CD4-positive, alpha-beta T cell (primary cell): ENCODE measurements at regions of chr6 and their contacts with region 1.

Region 1: DNA sequence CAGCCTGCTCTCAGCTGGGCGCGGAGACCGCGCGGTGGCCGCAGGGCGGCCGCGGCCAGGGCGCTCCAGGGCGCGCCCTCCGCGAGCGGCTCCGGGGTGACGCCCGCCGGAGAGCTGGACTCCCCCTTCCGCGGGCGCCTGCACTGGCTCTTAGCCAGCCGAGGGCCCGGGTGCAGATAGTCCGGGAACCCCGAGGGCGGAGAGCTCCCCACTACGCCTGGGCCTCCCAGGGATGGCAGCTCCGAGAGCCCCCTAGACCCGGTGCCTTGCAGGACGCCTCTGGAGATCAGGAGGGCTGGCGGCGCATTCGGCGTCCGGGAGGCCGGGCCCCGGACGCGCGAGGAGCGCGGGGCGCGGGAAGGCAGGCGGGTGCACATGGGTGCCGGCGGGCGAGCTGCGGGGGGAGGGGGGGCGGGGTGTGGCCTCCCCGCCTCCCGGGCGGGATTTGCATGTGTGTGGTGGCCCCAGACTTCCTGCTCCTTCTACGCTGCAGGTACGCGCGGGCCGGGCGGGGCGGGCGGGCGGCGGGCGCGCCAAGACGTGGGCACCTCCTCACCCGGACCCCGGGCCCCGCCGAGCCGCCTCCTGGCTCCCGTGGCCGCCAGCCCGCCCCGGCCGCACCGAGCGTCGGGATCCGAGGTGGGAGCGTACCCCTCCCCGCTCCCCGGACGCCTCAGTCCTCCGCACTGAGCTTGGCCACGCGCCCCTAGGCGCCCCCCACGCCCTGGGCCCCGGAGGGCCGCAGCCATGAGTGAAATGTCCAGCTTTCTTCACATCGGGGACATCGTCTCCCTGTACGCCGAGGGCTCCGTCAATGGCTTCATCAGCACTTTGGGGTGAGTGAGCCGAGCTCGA is at the start of gene ITPR3:
- DNase-seq: peak; percentile 61 to 93 (median 74)
- ATAC-seq: peak; percentile 88
- H3K4me3 ChIP-seq: peak within 1 kb of the TSS; percentile 99
- H3K4me3 Mint-ChIP-seq: peak within 1 kb of the TSS; percentile 95
- H3K27ac ChIP-seq: peak within 1 kb of the TSS; percentile 76 to 82
- H3K27ac Mint-ChIP-seq: peak within 1 kb of the TSS; percentile 93
- H3K4me1 ChIP-seq: peaks cover 60% of the 10 kb centered on the region
- H3K4me1 Mint-ChIP-seq: peaks cover 42% of the 10 kb centered on the region
- H3K27me3 ChIP-seq: no peaks in the 10 kb centered on the region
- H3K27me3 Mint-ChIP-seq: no peaks in the 10 kb centered on the region
- CTCF ChIP-seq: no peak
- total RNA-seq, gene ITPR3: 44.5 to 45.5 TPM

Region 2: GRCh38 chr6:32387589-32388340 is 1233.3 kb before region 1 on chr6:
- CTCF ChIA-PET with region 1: no interaction called
- POLR2A ChIA-PET with region 1: no interaction called
- intact Hi-C with region 1: no loop called
- DNase-seq: no peak
- ATAC-seq: no peak
- H3K4me3 ChIP-seq: no peak overlapping the region
- H3K4me3 Mint-ChIP-seq: no peak overlapping the region
- H3K27ac ChIP-seq: no peak overlapping the region
- H3K27ac Mint-ChIP-seq: no peak overlapping the region
- H3K4me1 ChIP-seq: no peaks in the 10 kb centered on the region
- H3K4me1 Mint-ChIP-seq: no peaks in the 10 kb centered on the region
- H3K27me3 ChIP-seq: no peaks in the 10 kb centered on the region
- H3K27me3 Mint-ChIP-seq: peaks cover 34% of the 10 kb centered on the region
- CTCF ChIP-seq: no peak

Region 3: DNA sequence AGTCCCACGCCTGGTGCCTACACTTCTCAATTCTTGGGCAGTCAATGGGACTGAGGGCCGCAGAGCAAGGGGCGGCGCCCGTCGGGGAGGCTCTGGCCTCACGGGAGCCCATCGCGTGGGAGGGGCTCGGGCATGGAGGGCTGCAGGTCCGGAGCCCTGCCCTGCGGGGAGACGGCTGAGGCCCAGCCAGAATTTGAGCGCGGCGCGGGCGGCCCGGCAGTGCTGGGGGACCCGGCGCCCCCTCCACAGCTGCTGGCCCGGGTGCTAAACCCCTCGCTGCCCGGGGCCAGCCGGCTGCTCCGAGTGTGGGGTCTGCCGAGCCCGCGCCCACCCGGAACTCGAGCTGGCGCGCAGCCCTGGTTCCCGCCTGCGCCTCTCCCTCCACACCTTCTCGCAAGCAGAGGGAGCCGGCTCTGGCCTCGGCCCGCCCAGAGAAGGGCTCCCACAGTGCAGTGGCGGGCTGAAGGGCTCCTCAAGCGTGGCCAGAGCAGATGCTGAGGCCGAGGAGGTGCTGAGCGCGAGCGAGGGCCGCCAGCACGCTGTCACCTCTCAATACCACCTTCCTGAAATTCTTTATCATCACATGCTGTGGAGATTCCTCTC is 99.5 kb before region 1 on chr6:
- CTCF ChIA-PET with region 1: no interaction called
- POLR2A ChIA-PET with region 1: no interaction called
- intact Hi-C with region 1: no loop called
- DNase-seq: no peak
- ATAC-seq: no peak
- H3K4me3 ChIP-seq: no peak overlapping the region
- H3K4me3 Mint-ChIP-seq: no peak overlapping the region
- H3K27ac ChIP-seq: no peak overlapping the region
- H3K27ac Mint-ChIP-seq: no peak overlapping the region
- H3K4me1 ChIP-seq: no peaks in the 10 kb centered on the region
- H3K4me1 Mint-ChIP-seq: no peaks in the 10 kb centered on the region
- H3K27me3 ChIP-seq: no peaks in the 10 kb centered on the region
- H3K27me3 Mint-ChIP-seq: no peaks in the 10 kb centered on the region
- CTCF ChIP-seq: no peak

Region 4: DNA sequence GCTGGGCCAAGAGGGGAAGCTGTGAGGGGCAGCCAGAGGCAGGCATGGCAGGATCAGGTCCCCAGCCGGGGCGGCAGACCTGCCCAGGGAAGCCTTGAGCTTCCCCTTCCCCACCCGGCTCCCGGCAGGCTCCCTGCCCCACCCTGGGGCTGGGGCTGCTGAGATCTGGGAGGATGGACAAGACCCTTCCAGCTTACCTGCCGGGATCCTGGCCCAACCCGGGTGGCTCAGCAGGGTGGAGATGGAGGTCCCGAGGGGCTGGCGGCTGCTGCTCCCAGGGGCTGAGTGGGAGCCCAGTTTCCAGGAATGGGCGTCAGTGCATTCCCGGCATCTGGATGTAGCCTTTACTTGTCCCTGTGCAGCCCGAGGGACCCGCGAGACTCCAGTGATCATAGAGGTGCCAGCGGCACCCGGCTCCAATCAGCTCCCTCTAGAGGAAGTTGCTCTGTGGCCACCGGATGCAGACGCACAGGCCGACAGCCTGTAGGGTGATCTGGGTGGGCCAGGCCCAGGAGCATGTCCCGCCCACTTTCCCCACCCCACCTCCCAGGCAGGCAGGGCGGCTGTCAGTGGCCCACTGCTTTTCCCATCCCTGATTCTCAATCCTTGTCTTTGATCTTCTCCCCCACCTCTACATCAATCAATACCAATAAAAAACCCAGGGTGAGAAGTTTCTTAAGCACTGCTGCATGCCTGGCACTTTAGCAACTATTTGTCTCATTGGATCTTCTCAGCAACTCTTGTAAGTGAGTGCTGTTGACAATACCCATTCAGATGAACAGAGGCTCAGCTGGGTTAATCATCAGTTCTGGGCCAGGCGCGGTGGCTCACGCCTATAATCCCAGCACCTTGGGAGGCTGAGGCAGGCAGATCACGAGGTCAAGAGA is 41.0 kb before region 1 on chr6 and contains the start of gene BAK1:
- CTCF ChIA-PET with region 1: interaction called, 4 read pairs
- POLR2A ChIA-PET with region 1: interaction called, 11 read pairs
- intact Hi-C with region 1: no loop called
- DNase-seq: peak; percentile 64 to 92 (median 78)
- ATAC-seq: peak; percentile 93
- H3K4me3 ChIP-seq: peak within 1 kb of the TSS; percentile 99
- H3K4me3 Mint-ChIP-seq: peak within 1 kb of the TSS; percentile 96
- H3K27ac ChIP-seq: peak within 1 kb of the TSS; percentile 82 to 88
- H3K27ac Mint-ChIP-seq: peak within 1 kb of the TSS; percentile 97
- H3K4me1 ChIP-seq: peaks cover 51% of the 10 kb centered on the region
- H3K4me1 Mint-ChIP-seq: peaks cover 44% of the 10 kb centered on the region
- H3K27me3 ChIP-seq: no peaks in the 10 kb centered on the region
- H3K27me3 Mint-ChIP-seq: no peaks in the 10 kb centered on the region
- CTCF ChIP-seq: peak; percentile 63
- total RNA-seq, gene BAK1: 38.3 to 40.8 TPM

Region 5: GRCh38 chr6:33607784-33608161 is 13.3 kb before region 1 on chr6:
- CTCF ChIA-PET with region 1: no interaction called
- POLR2A ChIA-PET with region 1: interaction called, 10 read pairs
- intact Hi-C with region 1: no loop called
- DNase-seq: peak in 6 of 14 experiments; percentile 22 to 62 (median 53)
- ATAC-seq: peak; percentile 55
- H3K4me3 ChIP-seq: no peak overlapping the region
- H3K4me3 Mint-ChIP-seq: no peak overlapping the region
- H3K27ac ChIP-seq: no peak overlapping the region
- H3K27ac Mint-ChIP-seq: no peak overlapping the region
- H3K4me1 ChIP-seq: peaks cover 4% of the 10 kb centered on the region
- H3K4me1 Mint-ChIP-seq: no peaks in the 10 kb centered on the region
- H3K27me3 ChIP-seq: no peaks in the 10 kb centered on the region
- H3K27me3 Mint-ChIP-seq: no peaks in the 10 kb centered on the region
- CTCF ChIP-seq: no peak

Region 6: GRCh38 chr6:33668927-33669326 is 47.8 kb after region 1 on chr6:
- CTCF ChIA-PET with region 1: interaction called, 3 read pairs
- POLR2A ChIA-PET with region 1: interaction called, 12 read pairs
- intact Hi-C with region 1: no loop called
- DNase-seq: peak; percentile 54 to 88 (median 74)
- ATAC-seq: peak; percentile 99
- H3K4me3 ChIP-seq: no peak overlapping the region
- H3K4me3 Mint-ChIP-seq: no peak overlapping the region
- H3K27ac ChIP-seq: peak overlapping the region in 1 of 2 donors; percentile 40
- H3K27ac Mint-ChIP-seq: peak overlapping the region; percentile 81
- H3K4me1 ChIP-seq: peaks cover 19% of the 10 kb centered on the region
- H3K4me1 Mint-ChIP-seq: peaks cover 14% of the 10 kb centered on the region
- H3K27me3 ChIP-seq: no peaks in the 10 kb centered on the region
- H3K27me3 Mint-ChIP-seq: no peaks in the 10 kb centered on the region
- CTCF ChIP-seq: no peak

Region 7: GRCh38 chr6:33711140-33712129 is 90.4 kb after region 1 on chr6 and contains the start of gene UQCC2:
- CTCF ChIA-PET with region 1: interaction called, 3 read pairs
- POLR2A ChIA-PET with region 1: interaction called, 22 read pairs
- intact Hi-C with region 1: no loop called
- DNase-seq: peak; percentile 93 to 99 (median 97)
- ATAC-seq: peak; percentile 97
- H3K4me3 ChIP-seq: peak within 1 kb of the TSS; percentile 72
- H3K4me3 Mint-ChIP-seq: peak within 1 kb of the TSS; percentile 100
- H3K27ac ChIP-seq: peak within 1 kb of the TSS; percentile 84 to 90
- H3K27ac Mint-ChIP-seq: peak within 1 kb of the TSS; percentile 97
- H3K4me1 ChIP-seq: peaks cover 27% of the 10 kb centered on the region
- H3K4me1 Mint-ChIP-seq: peaks cover 31% of the 10 kb centered on the region
- H3K27me3 ChIP-seq: no peaks in the 10 kb centered on the region
- H3K27me3 Mint-ChIP-seq: no peaks in the 10 kb centered on the region
- CTCF ChIP-seq: peak; percentile 80
- total RNA-seq, gene UQCC2: 8.7 to 9.3 TPM

Region 8: DNA sequence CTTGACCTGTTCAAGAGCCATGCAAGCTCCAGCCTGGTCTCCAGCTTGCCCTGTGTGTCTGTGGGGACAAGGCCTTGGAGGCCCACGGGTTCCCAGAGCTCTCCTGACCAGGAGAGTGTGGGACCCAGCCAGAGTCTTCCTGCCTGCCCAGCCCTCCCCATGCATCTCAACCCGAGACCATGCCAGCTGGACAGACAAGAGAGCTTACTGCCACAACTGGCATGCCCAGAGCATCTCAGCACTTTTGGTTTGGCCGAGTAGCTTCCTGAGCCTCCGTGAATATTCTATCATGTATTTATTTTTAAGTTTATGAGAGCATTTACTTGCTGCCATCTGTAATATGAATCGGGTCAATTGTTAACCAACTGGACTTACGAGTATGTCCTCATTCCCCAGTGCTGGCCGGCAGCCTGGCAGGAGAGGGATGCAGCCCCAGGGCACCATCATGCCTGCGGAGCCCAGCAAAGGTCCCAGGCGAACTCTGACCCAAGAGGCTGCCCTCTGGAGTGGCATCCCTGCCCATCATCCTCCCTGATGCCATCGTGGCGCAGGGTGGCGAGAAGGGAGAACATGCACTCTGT is 110.8 kb after region 1 on chr6:
- CTCF ChIA-PET with region 1: no interaction called
- POLR2A ChIA-PET with region 1: no interaction called
- intact Hi-C with region 1: no loop called
- DNase-seq: no peak
- ATAC-seq: no peak
- H3K4me3 ChIP-seq: no peak overlapping the region
- H3K4me3 Mint-ChIP-seq: no peak overlapping the region
- H3K27ac ChIP-seq: no peak overlapping the region
- H3K27ac Mint-ChIP-seq: no peak overlapping the region
- H3K4me1 ChIP-seq: no peaks in the 10 kb centered on the region
- H3K4me1 Mint-ChIP-seq: no peaks in the 10 kb centered on the region
- H3K27me3 ChIP-seq: no peaks in the 10 kb centered on the region
- H3K27me3 Mint-ChIP-seq: no peaks in the 10 kb centered on the region
- CTCF ChIP-seq: no peak